SK-N-SH (cell line): ENCODE measurements at regions of chr17 and their contacts with region 1.

Region 1: GRCh38 chr17:67559377-67559966 is 158.3 kb upstream of the NOL11 start:
- DNase-seq: no peak
- H3K4me3 ChIP-seq: no peak overlapping the region
- H3K27ac ChIP-seq: no peak overlapping the region
- H3K4me1 ChIP-seq: peaks cover 3 to 16% of the 10 kb centered on the region in 2 experiments; a peak in 3 of 4 replicates
- H3K27me3 ChIP-seq: no peaks in the 10 kb centered on the region
- CTCF ChIP-seq: peak; percentile 41
- EP300 ChIP-seq: no peak
- RAD21 ChIP-seq: peak; percentile 37

Region 2: DNA sequence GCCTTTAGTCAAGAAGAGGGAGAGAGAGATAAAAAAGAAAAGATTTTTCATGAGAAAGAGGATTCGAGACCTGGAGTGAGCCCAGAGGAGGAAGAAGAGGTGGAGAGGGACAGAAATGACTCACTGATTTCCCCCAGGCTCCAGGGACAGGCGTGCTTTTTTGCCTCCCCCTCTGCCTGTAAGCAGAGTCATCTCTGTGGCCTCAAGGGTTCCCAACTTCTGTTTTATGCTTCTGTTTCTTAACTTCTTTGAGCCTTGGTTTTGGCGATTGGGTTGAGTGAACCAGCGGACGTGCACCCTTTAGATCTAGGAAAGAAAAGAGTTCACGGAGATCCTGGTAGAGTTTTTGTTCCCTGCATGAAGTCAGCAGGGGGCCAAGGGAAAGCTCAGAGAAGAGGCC is 10.4 kb after region 1 on chr17:
- CTCF ChIA-PET with region 1: interaction called, 10 read pairs
- POLR2A ChIA-PET with region 1: no interaction called
- DNase-seq: no peak
- H3K4me3 ChIP-seq: no peak overlapping the region
- H3K27ac ChIP-seq: no peak overlapping the region; a peak in 1 of 4 replicates
- H3K4me1 ChIP-seq: peaks cover 0 to 11% of the 10 kb centered on the region in 2 experiments; a peak in 1 of 4 replicates
- H3K27me3 ChIP-seq: no peaks in the 10 kb centered on the region
- CTCF ChIP-seq: no peak
- EP300 ChIP-seq: no peak
- RAD21 ChIP-seq: no peak